ENCODE measurements at regions of chr5 and their contacts with region 1.

Region 1: GRCh38 chr5:43729846-43730478 is 127.0 kb downstream of the NNT start:
- DNase-seq: peak; percentile 33
- H3K4me3 ChIP-seq: no peak overlapping the region
- H3K27ac ChIP-seq: no peak overlapping the region
- H3K4me1 ChIP-seq: no peaks in the 10 kb centered on the region
- CTCF ChIP-seq: peak; percentile 87

Region 2: DNA sequence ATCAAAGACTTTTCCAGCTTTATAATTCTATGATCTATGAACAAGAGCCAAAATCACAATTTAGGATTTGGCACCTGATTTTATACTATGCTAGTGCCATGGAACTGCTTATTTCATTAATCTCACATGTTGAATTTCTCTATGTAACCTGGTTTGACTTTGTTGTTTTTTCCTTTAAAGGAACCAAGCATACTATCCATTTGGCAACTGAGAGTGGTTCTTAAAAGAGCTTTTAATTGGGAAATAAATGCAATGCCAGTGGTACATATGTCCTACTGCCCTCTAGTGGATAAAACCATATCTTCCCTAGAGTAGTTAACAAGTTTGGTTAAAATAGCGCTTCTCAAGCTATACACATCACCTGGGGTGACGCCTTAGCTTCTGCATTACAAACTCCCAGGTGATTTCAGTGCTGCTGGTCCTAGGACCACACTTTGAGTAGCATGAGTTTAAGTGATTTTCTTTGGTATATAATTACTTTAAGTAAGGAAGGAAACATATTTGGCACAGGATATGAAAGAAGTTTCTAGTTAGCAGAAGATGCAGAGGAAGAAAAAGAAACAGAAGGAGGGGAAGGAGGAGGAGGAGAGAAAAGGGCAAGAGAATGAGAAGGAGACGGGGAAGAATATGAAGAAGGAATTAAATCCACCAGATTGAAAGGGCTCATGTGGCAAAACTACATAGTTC is 602.5 kb after region 1 on chr5:
- CTCF ChIA-PET with region 1: no interaction called
- POLR2A ChIA-PET with region 1: no interaction called
- intact Hi-C with region 1: loop called (anchors 2 kb)
- DNase-seq: peak; percentile 48
- H3K4me3 ChIP-seq: no peak overlapping the region
- H3K27ac ChIP-seq: no peak overlapping the region
- H3K4me1 ChIP-seq: no peaks in the 10 kb centered on the region
- CTCF ChIP-seq: peak; percentile 87

Region 3: DNA sequence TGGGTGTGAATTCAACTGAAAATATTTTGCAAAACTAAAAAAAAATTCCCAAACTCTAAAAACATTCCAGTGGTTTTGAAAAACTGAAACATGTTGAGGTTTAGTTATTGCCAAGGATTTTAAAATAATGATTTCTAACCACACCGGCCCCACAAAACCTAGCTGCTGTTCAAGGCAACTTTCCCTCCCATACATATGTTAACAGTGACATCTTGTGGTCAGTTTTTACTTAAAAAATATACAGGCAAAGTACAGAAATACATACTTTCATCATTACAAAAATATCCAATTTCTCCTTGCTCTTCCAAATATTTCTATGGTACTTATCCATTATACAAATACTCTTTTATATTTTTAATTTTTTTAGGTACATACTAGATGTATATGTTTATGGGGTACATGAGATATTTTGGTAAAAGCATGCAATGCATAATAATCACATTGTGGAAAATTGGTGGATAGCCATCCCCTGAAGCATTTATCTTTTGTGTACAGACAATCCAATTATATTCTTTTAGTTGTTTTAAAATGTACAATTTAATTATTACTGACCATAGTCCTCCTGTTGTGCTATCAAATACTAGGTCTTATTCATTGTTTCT is 1044.4 kb after region 1 on chr5:
- CTCF ChIA-PET with region 1: no interaction called
- POLR2A ChIA-PET with region 1: no interaction called
- intact Hi-C with region 1: loop called (anchors 10 kb)
- DNase-seq: peak; percentile 42
- H3K4me3 ChIP-seq: no peak overlapping the region
- H3K27ac ChIP-seq: no peak overlapping the region
- H3K4me1 ChIP-seq: no peaks in the 10 kb centered on the region
- CTCF ChIP-seq: peak; percentile 83